Prostate gland (tissue), 2 donors: ENCODE measurements at regions of chr12 and their contacts with region 1.

Region 1: DNA sequence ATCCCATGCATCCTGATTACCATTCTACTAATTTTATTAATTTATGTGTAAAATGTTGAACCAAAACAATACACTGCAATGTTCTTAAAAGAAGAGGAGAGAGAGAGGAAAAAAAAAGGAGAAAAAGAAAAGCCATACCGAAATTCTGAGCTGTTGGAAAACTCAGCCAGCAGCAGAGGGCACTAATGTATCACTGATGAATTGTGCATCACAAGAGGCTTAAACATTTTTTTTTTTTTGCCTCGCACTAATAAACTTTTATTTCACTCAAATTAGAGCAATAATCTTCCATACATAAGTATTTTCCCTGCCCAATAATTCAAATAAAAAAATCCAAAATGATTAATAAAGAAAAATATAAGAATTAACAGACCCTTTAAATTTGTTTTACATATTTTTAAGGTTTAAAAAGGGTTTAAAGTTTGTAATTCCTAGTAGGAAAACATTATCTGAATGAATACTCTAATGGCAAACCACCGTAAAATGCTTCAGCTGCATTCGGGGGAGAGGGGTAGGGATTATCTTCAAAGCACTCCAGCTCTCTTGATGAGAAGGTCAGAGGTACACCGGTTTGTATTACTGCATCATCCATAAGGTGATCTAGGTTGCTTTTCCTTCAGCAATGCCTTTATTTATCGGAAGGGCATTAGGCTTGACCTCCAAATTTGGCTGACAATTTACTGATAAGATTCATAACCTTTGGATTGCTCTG is 41.9 kb downstream of the ATP23 start:
- DNase-seq: no peak
- H3K4me3 ChIP-seq: no peak overlapping the region
- H3K27ac ChIP-seq: no peak overlapping the region
- H3K4me1 ChIP-seq: no peaks in the 10 kb centered on the region
- H3K27me3 ChIP-seq: no peaks in the 10 kb centered on the region
- CTCF ChIP-seq: peak in 3 of 4 experiments; percentile 45 to 76 (median 68)
- POLR2A ChIP-seq: no peak

Region 2: DNA sequence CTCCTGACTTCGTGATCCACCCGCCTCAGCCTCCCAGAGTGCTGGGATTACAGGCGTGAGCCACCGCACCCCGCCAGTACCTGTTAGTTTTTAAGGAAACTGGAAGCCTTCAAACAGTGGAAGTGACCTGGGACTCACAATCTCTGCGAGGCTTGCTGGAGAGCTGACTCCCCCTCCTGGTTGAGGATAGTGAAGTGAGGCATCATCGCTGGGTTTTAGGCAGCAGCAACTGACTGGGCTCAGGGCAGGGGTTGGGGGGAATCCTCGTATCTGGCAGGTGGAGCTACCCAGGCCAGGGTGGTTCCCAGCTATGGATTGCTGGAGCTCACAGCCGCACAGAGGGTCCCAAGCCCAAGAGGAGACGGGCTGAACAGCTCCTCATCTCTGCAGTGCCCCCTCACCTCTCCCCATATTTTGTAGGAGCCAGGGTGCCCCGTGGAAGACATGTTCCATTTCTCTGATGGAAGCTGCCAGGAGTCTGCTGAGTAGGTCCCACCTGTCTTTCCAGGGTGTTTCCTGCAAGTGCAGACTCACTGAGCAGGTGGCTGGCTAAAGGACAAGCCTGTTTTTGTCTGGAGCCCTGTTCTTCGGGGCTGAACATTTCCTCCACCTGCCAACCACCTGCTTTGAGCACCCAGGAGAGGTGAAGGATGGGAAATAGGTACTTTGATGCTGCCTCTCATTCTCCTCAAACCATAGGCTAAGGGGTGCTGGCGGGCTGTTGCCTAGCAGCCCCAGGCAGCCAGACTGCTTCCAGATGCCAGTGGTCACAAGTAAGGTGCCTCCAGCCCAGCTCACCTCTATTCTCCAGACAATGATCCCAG is 167.9 kb before region 1 on chr12:
- intact Hi-C with region 1: no loop called
- DNase-seq: no peak
- H3K4me3 ChIP-seq: no peak overlapping the region
- H3K27ac ChIP-seq: no peak overlapping the region
- H3K4me1 ChIP-seq: no peaks in the 10 kb centered on the region
- H3K27me3 ChIP-seq: no peaks in the 10 kb centered on the region
- CTCF ChIP-seq: no peak
- POLR2A ChIP-seq: no peak

Region 3: GRCh38 chr12:57881475-57881874 is 101.8 kb before region 1 on chr12:
- intact Hi-C with region 1: no loop called
- DNase-seq: no peak
- H3K4me3 ChIP-seq: no peak overlapping the region
- H3K27ac ChIP-seq: no peak overlapping the region
- H3K4me1 ChIP-seq: no peaks in the 10 kb centered on the region
- H3K27me3 ChIP-seq: no peaks in the 10 kb centered on the region
- CTCF ChIP-seq: no peak
- POLR2A ChIP-seq: no peak

Region 4: DNA sequence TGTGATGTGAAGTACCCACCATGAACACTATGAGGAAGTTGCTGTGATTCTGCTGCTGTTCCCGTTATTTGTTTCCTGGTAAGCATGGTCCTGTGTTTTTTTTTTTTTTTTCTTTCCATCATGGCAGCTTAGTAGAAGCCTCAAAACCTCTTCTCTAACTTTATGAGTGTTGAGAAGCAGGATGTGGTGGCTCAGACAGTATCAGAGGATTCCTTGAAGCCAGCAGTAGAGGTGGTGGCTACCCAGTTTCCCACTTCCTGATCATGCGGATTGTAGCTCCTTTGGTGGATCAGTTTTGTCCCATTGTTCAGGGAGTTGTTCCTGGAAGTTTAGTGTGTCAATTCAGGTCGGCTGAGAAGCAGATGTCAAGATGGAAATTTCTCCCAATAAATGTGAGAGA is 133.9 kb after region 1 on chr12:
- intact Hi-C with region 1: no loop called
- DNase-seq: no peak
- H3K4me3 ChIP-seq: no peak overlapping the region
- H3K27ac ChIP-seq: no peak overlapping the region
- H3K4me1 ChIP-seq: no peaks in the 10 kb centered on the region
- H3K27me3 ChIP-seq: no peaks in the 10 kb centered on the region
- CTCF ChIP-seq: no peak
- POLR2A ChIP-seq: no peak

Region 5: DNA sequence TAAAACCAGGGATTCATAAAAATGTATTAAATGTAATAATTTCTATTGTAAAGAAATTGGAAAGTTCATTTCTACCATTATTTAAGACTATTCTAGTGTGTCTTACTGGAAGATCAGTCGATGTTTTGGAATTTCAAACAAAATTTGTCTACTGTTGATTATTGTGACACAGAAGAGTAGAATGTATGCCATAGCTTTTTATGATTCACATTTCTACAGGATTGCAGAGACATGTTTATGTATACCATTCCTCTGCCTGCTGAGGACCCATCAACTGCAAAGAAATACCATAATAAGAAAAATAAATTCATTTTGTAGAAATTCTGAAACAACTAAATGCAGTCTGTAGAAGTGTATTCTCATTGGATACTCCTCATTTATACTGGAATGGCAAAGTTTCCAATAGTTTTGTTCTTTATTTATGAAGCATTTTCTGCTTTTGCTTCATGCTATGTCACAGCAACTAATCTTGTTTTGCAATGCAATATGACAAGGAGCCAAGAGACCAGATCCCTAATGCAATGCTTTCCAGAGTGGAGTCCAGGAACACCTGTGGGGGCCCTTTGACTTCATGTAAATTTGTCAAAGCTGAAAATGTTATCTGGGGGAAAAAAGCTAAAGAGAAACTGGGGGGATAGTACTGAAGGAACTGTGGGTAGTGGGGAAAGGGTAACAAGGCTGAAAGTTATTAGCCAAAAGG is 1109.9 kb after region 1 on chr12:
- intact Hi-C with region 1: loop called (anchors 5 kb)
- DNase-seq: no peak
- H3K4me3 ChIP-seq: no peak overlapping the region
- H3K27ac ChIP-seq: no peak overlapping the region
- H3K4me1 ChIP-seq: no peaks in the 10 kb centered on the region
- H3K27me3 ChIP-seq: no peaks in the 10 kb centered on the region
- CTCF ChIP-seq: no peak
- POLR2A ChIP-seq: no peak

Region 6: GRCh38 chr12:59164991-59165718 is 1181.9 kb after region 1 on chr12:
- intact Hi-C with region 1: loop called (anchors 10 kb)
- DNase-seq: no peak
- H3K4me3 ChIP-seq: no peak overlapping the region
- H3K27ac ChIP-seq: no peak overlapping the region
- H3K4me1 ChIP-seq: no peaks in the 10 kb centered on the region
- H3K27me3 ChIP-seq: no peaks in the 10 kb centered on the region
- CTCF ChIP-seq: peak in 3 of 4 experiments; percentile 35 to 49 (median 47)
- POLR2A ChIP-seq: no peak